Psoas muscle (tissue), 8 donors: ENCODE measurements at regions of chr7 and their contacts with region 1.

Region 1: GRCh38 chr7:130010689-130011412 is 40.3 kb downstream of the ZC3HC1 start:
- DNase-seq: peak; percentile 71 to 86
- ATAC-seq: peak; percentile 70 to 84 (median 77)
- H3K4me3 ChIP-seq: no peak overlapping the region
- H3K27ac ChIP-seq: peak overlapping the region; percentile 85
- H3K4me1 ChIP-seq: peaks cover 28% of the 10 kb centered on the region
- H3K27me3 ChIP-seq: no peaks in the 10 kb centered on the region
- CTCF ChIP-seq: peak; percentile 91

Region 2: GRCh38 chr7:129657363-129657762 is 353.5 kb before region 1 on chr7:
- intact Hi-C with region 1: loop called (anchors 5 to 10 kb)
- DNase-seq: no peak
- ATAC-seq: peak in 1 of 4 donors; percentile 36
- H3K4me3 ChIP-seq: no peak overlapping the region
- H3K27ac ChIP-seq: no peak overlapping the region
- H3K4me1 ChIP-seq: no peaks in the 10 kb centered on the region
- H3K27me3 ChIP-seq: no peaks in the 10 kb centered on the region
- CTCF ChIP-seq: no peak

Region 3: GRCh38 chr7:129664029-129665012 is 346.5 kb before region 1 on chr7:
- intact Hi-C with region 1: loop called (anchors 5 to 10 kb)
- DNase-seq: no peak
- ATAC-seq: peak; percentile 55 to 67 (median 64)
- H3K4me3 ChIP-seq: no peak overlapping the region
- H3K27ac ChIP-seq: no peak overlapping the region
- H3K4me1 ChIP-seq: no peaks in the 10 kb centered on the region
- H3K27me3 ChIP-seq: no peaks in the 10 kb centered on the region
- CTCF ChIP-seq: peak; percentile 54

Region 4: DNA sequence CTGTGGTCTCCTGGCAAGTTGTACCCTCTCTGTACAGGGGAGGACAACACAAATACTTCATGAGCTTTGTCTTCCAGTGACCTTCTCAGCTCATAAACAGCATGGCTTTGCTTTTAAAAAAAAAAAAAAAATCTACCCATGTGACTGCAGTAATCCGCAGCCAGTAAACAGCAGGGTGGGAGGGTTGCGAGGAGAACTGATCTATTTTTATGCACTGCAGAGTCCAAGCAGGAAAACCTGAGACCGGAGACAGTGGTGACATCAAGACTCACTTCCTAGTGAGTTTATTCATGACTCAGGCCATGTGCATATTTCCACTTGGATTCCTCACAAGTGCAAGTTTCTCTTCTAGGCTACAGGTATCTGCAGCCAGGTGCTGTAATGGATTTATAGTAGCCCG is 271.4 kb before region 1 on chr7:
- intact Hi-C with region 1: loop called in 1 of 2 experiments (anchors 10 kb)
- DNase-seq: peak; percentile 25 to 69
- ATAC-seq: peak; percentile 88 to 92 (median 90)
- H3K4me3 ChIP-seq: no peak overlapping the region
- H3K27ac ChIP-seq: peak overlapping the region; percentile 86
- H3K4me1 ChIP-seq: peaks cover 42% of the 10 kb centered on the region
- H3K27me3 ChIP-seq: no peaks in the 10 kb centered on the region
- CTCF ChIP-seq: no peak

Region 5: DNA sequence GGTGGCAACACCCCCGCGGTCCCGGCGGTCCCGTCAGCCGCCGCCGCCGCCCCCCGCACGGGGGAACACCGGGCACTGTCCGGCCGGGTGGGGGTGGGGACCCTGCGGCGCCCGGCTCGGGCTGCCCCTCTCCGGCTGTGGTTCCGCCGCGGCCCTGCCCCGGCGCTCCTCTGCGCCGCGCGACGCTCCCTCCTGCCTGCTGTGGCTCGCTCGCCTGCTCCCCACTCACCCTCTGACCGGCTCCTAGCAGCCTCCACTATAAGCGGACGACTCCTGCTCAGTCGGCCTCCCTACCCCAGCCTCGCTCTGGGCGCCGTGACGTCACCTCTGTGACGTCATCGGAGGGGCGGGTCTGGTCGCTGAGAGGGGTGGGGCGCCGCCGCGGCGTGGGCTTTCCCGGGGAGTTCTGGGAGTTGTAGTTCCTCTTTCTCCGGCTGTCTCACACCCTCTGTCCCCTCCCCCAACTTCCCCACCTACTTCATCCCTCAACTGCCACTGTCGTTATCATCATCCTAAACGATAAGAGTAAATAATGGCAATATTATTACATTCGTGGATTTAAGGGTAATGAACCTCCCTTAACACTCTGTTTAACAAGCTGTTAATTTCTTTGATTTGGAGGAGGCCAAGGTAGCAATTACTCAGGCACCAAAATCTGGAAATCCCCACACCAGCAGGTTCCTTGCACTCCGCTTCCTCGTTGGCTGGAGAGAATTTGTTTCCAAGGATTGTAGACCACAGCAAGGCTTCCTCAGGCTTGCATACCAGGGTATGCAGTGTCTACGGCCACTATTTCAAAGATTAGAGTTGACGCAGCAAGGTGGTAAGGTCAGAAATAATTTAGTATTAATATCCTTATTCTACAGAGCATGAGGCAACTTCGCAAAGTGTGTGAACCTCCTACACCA is 57.9 kb before region 1 on chr7 and contains the start of gene UBE2H:
- intact Hi-C with region 1: loop called (anchors 5 kb)
- DNase-seq: peak; percentile 92 to 96
- ATAC-seq: peak; percentile 83 to 91 (median 86)
- H3K4me3 ChIP-seq: peak within 1 kb of the TSS; percentile 97
- H3K27ac ChIP-seq: peak within 1 kb of the TSS; percentile 98
- H3K4me1 ChIP-seq: peaks cover 12% of the 10 kb centered on the region
- H3K27me3 ChIP-seq: no peaks in the 10 kb centered on the region
- CTCF ChIP-seq: no peak
- total RNA-seq, gene UBE2H: 75.9 to 111 (median 77.4) TPM

Region 6: DNA sequence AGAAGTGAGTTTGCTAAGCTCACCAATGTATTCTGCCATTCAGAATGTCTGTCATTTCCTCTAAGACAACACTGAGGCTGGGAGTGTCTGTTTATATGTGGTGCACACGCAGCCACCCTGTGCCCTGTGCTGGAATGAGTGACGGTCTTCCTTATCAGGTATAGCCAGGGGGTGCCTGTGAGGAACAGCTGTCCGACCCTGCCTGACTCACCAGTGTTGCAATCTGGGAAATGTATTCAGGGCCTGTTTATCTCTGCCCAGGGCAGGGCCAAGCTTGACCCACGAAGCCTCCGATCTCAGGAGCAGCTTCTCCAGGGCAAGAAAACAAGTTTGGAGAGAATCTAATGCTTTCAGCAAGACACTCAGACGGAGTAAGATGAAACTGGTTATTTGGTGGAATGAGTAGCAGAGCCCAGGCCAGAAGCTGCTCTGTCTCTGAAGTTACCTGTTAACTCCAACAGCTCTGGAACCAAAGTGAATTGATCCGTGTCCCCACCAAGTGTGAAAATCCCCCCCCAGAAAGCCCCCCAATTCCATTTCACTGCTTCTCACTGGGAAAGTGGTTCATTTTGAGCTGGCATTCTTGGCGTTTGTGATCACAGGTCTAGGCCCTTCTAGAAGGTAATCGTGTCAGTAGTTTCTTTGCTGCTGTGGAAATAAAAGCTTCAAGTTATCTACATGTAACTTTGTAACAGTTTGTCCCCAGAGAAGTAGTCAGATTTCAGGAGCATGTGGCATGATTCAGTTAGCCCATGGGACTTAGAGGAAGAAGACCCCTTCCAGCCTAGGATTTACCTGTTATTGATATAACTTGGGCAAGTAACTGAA is 52.0 kb before region 1 on chr7:
- intact Hi-C with region 1: loop called (anchors 5 kb)
- DNase-seq: peak; percentile 60 to 85
- ATAC-seq: peak; percentile 99
- H3K4me3 ChIP-seq: no peak overlapping the region
- H3K27ac ChIP-seq: peak overlapping the region; percentile 94
- H3K4me1 ChIP-seq: peaks cover 13% of the 10 kb centered on the region
- H3K27me3 ChIP-seq: no peaks in the 10 kb centered on the region
- CTCF ChIP-seq: no peak